ENCODE measurements at regions of chr2 and their contacts with region 1.

Region 1: GRCh38 chr2:42663106-42663780 is 94.8 kb downstream of the MTA3 start:
- H3K4me3 ChIP-seq: no peak overlapping the region
- H3K27ac ChIP-seq: no peak overlapping the region
- H3K4me1 ChIP-seq: peaks cover 2% of the 10 kb centered on the region; the same call in 1 of the 2 replicates
- CTCF ChIP-seq: peak; percentile 56; the same call in 1 of the 2 replicates

Region 2: GRCh38 chr2:42312110-42312509 is 351.1 kb before region 1 on chr2:
- CTCF ChIA-PET with region 1: interaction called, 3 read pairs
- POLR2A ChIA-PET with region 1: interaction called, 14 read pairs
- H3K4me3 ChIP-seq: no peak overlapping the region
- H3K27ac ChIP-seq: no peak overlapping the region
- H3K4me1 ChIP-seq: no peaks in the 10 kb centered on the region
- CTCF ChIP-seq: no peak

Region 3: GRCh38 chr2:42386684-42387083 is 276.6 kb before region 1 on chr2:
- CTCF ChIA-PET with region 1: interaction called, 11 read pairs
- POLR2A ChIA-PET with region 1: no interaction called
- H3K4me3 ChIP-seq: no peak overlapping the region
- H3K27ac ChIP-seq: no peak overlapping the region
- H3K4me1 ChIP-seq: no peaks in the 10 kb centered on the region
- CTCF ChIP-seq: no peak

Region 4: GRCh38 chr2:42494355-42495233 is 168.6 kb before region 1 on chr2:
- CTCF ChIA-PET with region 1: interaction called, 27 read pairs
- POLR2A ChIA-PET with region 1: no interaction called
- H3K4me3 ChIP-seq: peak overlapping the region; percentile 65
- H3K27ac ChIP-seq: peak overlapping the region; percentile 91
- H3K4me1 ChIP-seq: peaks cover 16% of the 10 kb centered on the region
- CTCF ChIP-seq: peak; percentile 86

Region 5: GRCh38 chr2:42572297-42573081 is 90.8 kb before region 1 on chr2:
- CTCF ChIA-PET with region 1: no interaction called
- POLR2A ChIA-PET with region 1: no interaction called
- H3K4me3 ChIP-seq: no peak overlapping the region
- H3K27ac ChIP-seq: no peak overlapping the region
- H3K4me1 ChIP-seq: 0 out of 2 replicates have a peak, but pooled peaks cover 3% of the 10 kb centered on the region
- CTCF ChIP-seq: no peak

Region 6: GRCh38 chr2:42673989-42674579 is 10.8 kb after region 1 on chr2:
- CTCF ChIA-PET with region 1: interaction called, 14 read pairs
- POLR2A ChIA-PET with region 1: no interaction called
- H3K4me3 ChIP-seq: no peak overlapping the region
- H3K27ac ChIP-seq: no peak overlapping the region
- H3K4me1 ChIP-seq: no peaks in the 10 kb centered on the region
- CTCF ChIP-seq: no peak

Region 7: DNA sequence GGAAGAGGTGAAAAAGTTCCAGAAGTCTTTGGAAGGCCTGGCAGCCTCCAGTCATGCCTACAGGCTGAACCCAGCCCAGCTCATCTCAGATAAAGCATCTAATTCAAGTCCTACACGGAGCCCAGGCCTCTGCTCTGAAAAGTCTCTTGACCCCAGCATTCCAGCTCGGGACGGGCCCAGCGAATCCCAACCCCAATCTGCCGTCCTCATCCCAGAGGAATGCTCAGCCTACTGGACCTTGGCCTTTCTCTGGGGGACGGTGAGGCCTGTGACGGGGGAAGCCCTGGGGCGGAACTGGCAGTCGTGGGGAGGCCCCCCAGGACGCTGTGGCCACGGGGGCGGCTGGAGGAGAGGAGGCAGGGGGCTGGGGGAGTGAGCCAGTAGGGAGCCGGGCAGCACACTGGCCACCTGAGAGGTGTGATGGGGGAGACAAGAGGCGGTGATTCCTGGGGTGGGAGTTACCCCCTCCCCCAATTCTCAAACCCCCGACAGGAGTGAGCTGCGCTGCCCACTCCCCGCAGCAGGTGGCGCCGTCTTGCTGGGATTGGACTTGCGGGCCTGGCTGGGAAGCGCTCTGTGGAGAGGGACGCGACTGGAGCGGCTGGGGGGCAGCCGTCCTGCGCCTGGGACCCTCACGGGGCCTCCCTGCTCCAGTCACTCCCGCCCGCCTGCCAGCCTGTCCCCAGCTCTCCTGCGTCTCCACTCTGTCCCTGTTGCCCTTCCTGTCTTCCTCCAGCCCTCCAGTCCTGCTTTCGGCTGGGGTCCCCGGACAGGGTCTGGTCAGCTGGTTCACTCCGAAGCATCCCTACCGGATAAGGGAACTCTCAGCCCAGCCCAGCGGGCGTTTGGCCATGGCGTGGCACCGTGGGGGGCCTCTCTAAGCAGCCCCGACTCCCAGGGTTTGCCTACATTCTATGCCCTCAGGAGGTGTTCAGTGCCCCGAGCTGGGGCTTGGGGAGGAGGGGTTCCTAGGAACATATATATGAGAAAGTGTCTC is 311.8 kb after region 1 on chr2:
- CTCF ChIA-PET with region 1: no interaction called
- POLR2A ChIA-PET with region 1: no interaction called
- H3K4me3 ChIP-seq: peak overlapping the region; percentile 20; the same call in 1 of the 2 replicates
- H3K27ac ChIP-seq: no peak overlapping the region; the same call in 1 of the 2 replicates
- H3K4me1 ChIP-seq: no peaks in the 10 kb centered on the region
- CTCF ChIP-seq: peak; percentile 93

Measured in HEK293 (cell line).